ENCODE measurements at regions of chrX and their contacts with region 1.

Region 1: GRCh38 chrX:56802921-56803849 is 74.1 kb downstream of the NBDY start:
- DNase-seq: peak; percentile 77
- ATAC-seq: peak; percentile 82
- H3K4me3 ChIP-seq: peak overlapping the region; percentile 60
- H3K27ac ChIP-seq: peak overlapping the region; percentile 84
- H3K4me1 ChIP-seq: peaks cover 20% of the 10 kb centered on the region
- H3K27me3 ChIP-seq: no peaks in the 10 kb centered on the region
- CTCF ChIP-seq: peak; percentile 62 to 82 (median 66)
- EP300 ChIP-seq: no peak
- POLR2A ChIP-seq: no peak
- RAD21 ChIP-seq: peak; percentile 91

Region 2: GRCh38 chrX:56530011-56530410 is 273.2 kb before region 1 on chrX:
- CTCF ChIA-PET with region 1: no interaction called
- POLR2A ChIA-PET with region 1: no interaction called
- RAD21 ChIA-PET with region 1: no interaction called
- SMC1A ChIA-PET with region 1: no interaction called
- in situ Hi-C with region 1: no loop called
- intact Hi-C with region 1: no loop called
- DNase-seq: no peak
- ATAC-seq: no peak
- H3K4me3 ChIP-seq: no peak overlapping the region
- H3K27ac ChIP-seq: no peak overlapping the region
- H3K4me1 ChIP-seq: no peaks in the 10 kb centered on the region
- H3K27me3 ChIP-seq: no peaks in the 10 kb centered on the region
- CTCF ChIP-seq: no peak
- EP300 ChIP-seq: no peak
- POLR2A ChIP-seq: no peak
- RAD21 ChIP-seq: no peak

Region 3: DNA sequence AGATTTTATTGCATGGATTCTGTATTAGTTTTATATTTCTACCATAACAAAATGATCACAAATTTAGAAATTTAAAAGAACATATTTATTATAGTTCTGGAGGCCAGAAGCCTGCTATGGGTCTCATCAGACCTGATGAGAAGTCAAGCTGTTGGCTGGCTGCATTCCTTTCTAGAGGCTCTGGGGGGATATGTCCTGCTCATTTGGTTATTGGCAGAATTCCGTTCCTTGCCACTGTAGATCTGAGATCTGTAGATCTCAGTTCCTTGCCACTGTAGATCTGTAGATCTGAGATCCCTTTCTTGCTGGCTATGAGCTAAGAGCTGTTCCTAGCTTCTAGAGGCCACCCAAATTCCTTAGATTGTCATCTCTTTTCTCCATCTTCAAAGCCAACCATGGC is 56.8 kb before region 1 on chrX:
- CTCF ChIA-PET with region 1: no interaction called
- POLR2A ChIA-PET with region 1: no interaction called
- RAD21 ChIA-PET with region 1: no interaction called
- SMC1A ChIA-PET with region 1: no interaction called
- in situ Hi-C with region 1: no loop called
- intact Hi-C with region 1: no loop called
- DNase-seq: no peak
- ATAC-seq: no peak
- H3K4me3 ChIP-seq: no peak overlapping the region
- H3K27ac ChIP-seq: no peak overlapping the region
- H3K4me1 ChIP-seq: no peaks in the 10 kb centered on the region
- H3K27me3 ChIP-seq: no peaks in the 10 kb centered on the region; a peak in 1 of 4 replicates
- CTCF ChIP-seq: no peak
- EP300 ChIP-seq: no peak
- POLR2A ChIP-seq: no peak
- RAD21 ChIP-seq: no peak

Region 4: GRCh38 chrX:56764153-56764974 is 38.8 kb before region 1 on chrX:
- CTCF ChIA-PET with region 1: interaction called, 12 read pairs
- POLR2A ChIA-PET with region 1: interaction called, 3 read pairs
- RAD21 ChIA-PET with region 1: interaction called, 13 read pairs
- SMC1A ChIA-PET with region 1: interaction called, 3 read pairs
- in situ Hi-C with region 1: no loop called
- intact Hi-C with region 1: no loop called
- DNase-seq: peak; percentile 99
- ATAC-seq: peak; percentile 60
- H3K4me3 ChIP-seq: peak overlapping the region; percentile 64
- H3K27ac ChIP-seq: peak overlapping the region; percentile 90
- H3K4me1 ChIP-seq: peaks cover 31% of the 10 kb centered on the region
- H3K27me3 ChIP-seq: no peaks in the 10 kb centered on the region
- CTCF ChIP-seq: peak; percentile 53 to 87 (median 55); a peak in 5 of 6 replicates
- EP300 ChIP-seq: 0 out of 4 replicates have a peak, but pooled peaks of 1 of the 2 experiments have one; percentile 21
- POLR2A ChIP-seq: no peak
- RAD21 ChIP-seq: peak; percentile 90

Region 5: GRCh38 chrX:56826020-56826419 is 22.8 kb after region 1 on chrX:
- CTCF ChIA-PET with region 1: no interaction called
- POLR2A ChIA-PET with region 1: no interaction called
- RAD21 ChIA-PET with region 1: no interaction called
- SMC1A ChIA-PET with region 1: no interaction called
- in situ Hi-C with region 1: no loop called
- intact Hi-C with region 1: no loop called
- DNase-seq: no peak
- ATAC-seq: peak; percentile 63
- H3K4me3 ChIP-seq: no peak overlapping the region
- H3K27ac ChIP-seq: no peak overlapping the region
- H3K4me1 ChIP-seq: no peaks in the 10 kb centered on the region
- H3K27me3 ChIP-seq: no peaks in the 10 kb centered on the region
- CTCF ChIP-seq: no peak
- EP300 ChIP-seq: no peak
- POLR2A ChIP-seq: no peak
- RAD21 ChIP-seq: no peak

Region 6: GRCh38 chrX:57172544-57172943 is 369.4 kb after region 1 on chrX:
- CTCF ChIA-PET with region 1: no interaction called
- POLR2A ChIA-PET with region 1: no interaction called
- RAD21 ChIA-PET with region 1: no interaction called
- SMC1A ChIA-PET with region 1: no interaction called
- in situ Hi-C with region 1: no loop called
- intact Hi-C with region 1: no loop called
- DNase-seq: no peak
- ATAC-seq: no peak
- H3K4me3 ChIP-seq: no peak overlapping the region
- H3K27ac ChIP-seq: no peak overlapping the region
- H3K4me1 ChIP-seq: no peaks in the 10 kb centered on the region
- H3K27me3 ChIP-seq: no peaks in the 10 kb centered on the region
- CTCF ChIP-seq: no peak
- EP300 ChIP-seq: no peak
- POLR2A ChIP-seq: no peak
- RAD21 ChIP-seq: no peak

Region 7: GRCh38 chrX:57286507-57287251 is 483.5 kb after region 1 on chrX and contains the start of gene FAAH2:
- CTCF ChIA-PET with region 1: no interaction called
- POLR2A ChIA-PET with region 1: no interaction called
- RAD21 ChIA-PET with region 1: no interaction called
- SMC1A ChIA-PET with region 1: no interaction called
- in situ Hi-C with region 1: loop called (anchors 25 kb)
- intact Hi-C with region 1: loop called (anchors 10 kb)
- DNase-seq: peak; percentile 23
- ATAC-seq: peak; percentile 94
- H3K4me3 ChIP-seq: peak within 1 kb of the TSS; percentile 47
- H3K27ac ChIP-seq: peak within 1 kb of the TSS; percentile 15
- H3K4me1 ChIP-seq: no peaks in the 10 kb centered on the region
- H3K27me3 ChIP-seq: no peaks in the 10 kb centered on the region
- CTCF ChIP-seq: 0 out of 6 replicates have a peak, but pooled peaks of 1 of the 3 experiments have one; percentile 5
- EP300 ChIP-seq: peak in 1 of 2 experiments; percentile 30; a peak in 1 of 4 replicates
- POLR2A ChIP-seq: no peak
- RAD21 ChIP-seq: no peak
- polyA plus RNA-seq, gene FAAH2: 1.5 to 2.4 TPM

Region 8: GRCh38 chrX:57595381-57595811 is 792.2 kb after region 1 on chrX:
- CTCF ChIA-PET with region 1: no interaction called
- POLR2A ChIA-PET with region 1: no interaction called
- RAD21 ChIA-PET with region 1: no interaction called
- SMC1A ChIA-PET with region 1: no interaction called
- in situ Hi-C with region 1: loop called (anchors 25 kb)
- intact Hi-C with region 1: loop called (anchors 10 kb)
- DNase-seq: no peak
- ATAC-seq: peak; percentile 4; the same call in 1 of the 3 replicates
- H3K4me3 ChIP-seq: peak overlapping the region; percentile 18; the same call in 1 of the 2 replicates
- H3K27ac ChIP-seq: no peak overlapping the region
- H3K4me1 ChIP-seq: no peaks in the 10 kb centered on the region
- H3K27me3 ChIP-seq: no peaks in the 10 kb centered on the region
- CTCF ChIP-seq: no peak
- EP300 ChIP-seq: no peak
- POLR2A ChIP-seq: no peak
- RAD21 ChIP-seq: no peak

Region 9: DNA sequence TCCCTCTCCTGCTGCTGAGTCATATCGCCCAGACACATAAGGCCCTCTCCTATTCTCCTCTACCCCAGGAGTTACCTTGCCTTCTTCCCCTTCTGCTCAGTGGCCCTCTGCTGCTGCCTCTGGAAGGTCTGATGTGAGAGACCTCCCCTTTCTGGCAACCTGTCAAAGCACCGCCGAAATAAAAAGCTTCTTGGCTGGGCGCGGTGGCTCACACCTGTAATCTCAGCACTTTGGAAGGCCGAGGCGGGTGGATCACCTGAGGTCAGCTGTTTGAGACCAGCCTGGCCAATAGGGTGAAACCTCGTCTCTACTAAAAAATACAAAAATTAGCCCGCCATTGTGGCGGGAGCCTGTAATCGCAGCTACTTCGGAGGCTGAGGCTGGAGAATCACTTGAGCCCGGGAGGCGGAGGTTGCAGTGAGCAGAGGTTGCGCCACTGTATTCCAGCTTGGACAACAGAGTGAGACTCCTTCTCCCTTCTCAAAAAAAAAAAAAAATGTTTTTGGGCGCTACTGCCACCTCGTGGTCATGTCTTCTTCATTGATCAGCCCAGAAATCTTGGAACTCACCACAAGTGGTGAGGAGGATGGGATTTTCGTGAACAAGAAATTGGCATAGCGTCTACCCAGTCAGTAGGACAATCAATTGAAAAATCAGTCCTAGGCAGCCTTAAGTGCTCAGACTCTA is 1115.7 kb after region 1 on chrX:
- CTCF ChIA-PET with region 1: no interaction called
- POLR2A ChIA-PET with region 1: no interaction called
- RAD21 ChIA-PET with region 1: no interaction called
- SMC1A ChIA-PET with region 1: no interaction called
- in situ Hi-C with region 1: loop called (anchors 25 kb)
- intact Hi-C with region 1: no loop called
- DNase-seq: no peak
- ATAC-seq: peak; percentile 66
- H3K4me3 ChIP-seq: no peak overlapping the region
- H3K27ac ChIP-seq: no peak overlapping the region
- H3K4me1 ChIP-seq: no peaks in the 10 kb centered on the region
- H3K27me3 ChIP-seq: no peaks in the 10 kb centered on the region
- CTCF ChIP-seq: peak; percentile 45 to 49 (median 47); a peak in 5 of 6 replicates
- EP300 ChIP-seq: no peak
- POLR2A ChIP-seq: no peak
- RAD21 ChIP-seq: peak; percentile 52

Region 10: GRCh38 chrX:58025979-58026378 is 1222.8 kb after region 1 on chrX:
- CTCF ChIA-PET with region 1: interaction called, 3 read pairs
- POLR2A ChIA-PET with region 1: no interaction called
- RAD21 ChIA-PET with region 1: no interaction called
- SMC1A ChIA-PET with region 1: no interaction called
- in situ Hi-C with region 1: loop called (anchors 25 kb)
- intact Hi-C with region 1: loop called (anchors 5 kb)
- DNase-seq: no peak
- ATAC-seq: peak; percentile 69
- H3K4me3 ChIP-seq: no peak overlapping the region
- H3K27ac ChIP-seq: no peak overlapping the region
- H3K4me1 ChIP-seq: no peaks in the 10 kb centered on the region
- H3K27me3 ChIP-seq: no peaks in the 10 kb centered on the region
- CTCF ChIP-seq: peak; percentile 57 to 65 (median 61)
- EP300 ChIP-seq: no peak
- POLR2A ChIP-seq: no peak
- RAD21 ChIP-seq: peak; percentile 61